ENCODE measurements at regions of chr15 and their contacts with region 1.

Region 1: DNA sequence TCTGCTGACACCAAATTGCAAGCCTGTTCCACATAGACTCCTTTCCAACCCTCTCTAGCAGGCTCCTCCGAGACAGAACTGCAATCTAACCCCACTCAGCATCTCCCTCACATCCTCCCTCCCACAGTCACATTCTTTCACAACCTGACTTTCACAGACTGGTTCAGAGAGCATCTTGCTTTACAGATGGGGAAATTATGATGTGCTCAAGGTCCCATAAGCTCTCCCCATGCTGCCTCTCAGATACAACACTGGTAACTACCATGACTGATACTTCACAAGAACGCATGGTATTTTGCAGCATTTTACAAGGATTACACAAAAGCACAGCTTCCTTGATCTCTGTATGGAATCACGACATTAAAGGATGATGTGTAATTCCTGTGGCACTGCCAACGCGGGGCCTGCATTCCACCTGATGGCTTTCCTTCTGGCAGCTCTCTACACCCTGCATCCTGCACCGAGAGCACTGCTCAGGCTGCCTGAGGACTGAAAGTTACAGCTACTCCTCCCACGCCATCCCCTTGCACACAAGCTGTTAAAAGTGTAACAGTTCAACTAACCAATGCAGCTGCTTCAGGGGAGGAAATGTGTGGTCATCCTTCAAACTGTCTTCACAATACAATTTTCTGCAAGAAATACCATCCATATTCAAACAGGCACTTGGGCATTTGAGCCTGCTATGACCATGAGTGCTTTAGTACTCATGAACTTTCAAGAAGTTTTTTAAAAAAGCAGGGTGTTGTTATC is 27.6 kb downstream of the TBC1D2B start:
- DNase-seq: no peak
- ATAC-seq: peak; percentile 31
- H3K4me3 ChIP-seq: no peak overlapping the region
- H3K4me3 Mint-ChIP-seq: peak overlapping the region; percentile 33
- H3K27ac ChIP-seq: no peak overlapping the region
- H3K27ac Mint-ChIP-seq: peak overlapping the region; percentile 78
- H3K4me1 ChIP-seq: peaks cover 29 to 33% of the 10 kb centered on the region in 2 donors
- H3K4me1 Mint-ChIP-seq: peaks cover 54% of the 10 kb centered on the region
- H3K27me3 ChIP-seq: no peaks in the 10 kb centered on the region
- H3K27me3 Mint-ChIP-seq: no peaks in the 10 kb centered on the region
- CTCF ChIP-seq: no peak

Region 2: GRCh38 chr15:77224352-77224751 is 825.5 kb before region 1 on chr15:
- CTCF ChIA-PET with region 1: no interaction called
- POLR2A ChIA-PET with region 1: no interaction called
- intact Hi-C with region 1: no loop called
- DNase-seq: no peak
- ATAC-seq: no peak
- H3K4me3 ChIP-seq: no peak overlapping the region
- H3K4me3 Mint-ChIP-seq: no peak overlapping the region
- H3K27ac ChIP-seq: no peak overlapping the region
- H3K27ac Mint-ChIP-seq: no peak overlapping the region
- H3K4me1 ChIP-seq: peaks cover 0 to 12% of the 10 kb centered on the region in 2 donors
- H3K4me1 Mint-ChIP-seq: peaks cover 14% of the 10 kb centered on the region
- H3K27me3 ChIP-seq: no peaks in the 10 kb centered on the region
- H3K27me3 Mint-ChIP-seq: no peaks in the 10 kb centered on the region
- CTCF ChIP-seq: no peak

Region 3: GRCh38 chr15:77393471-77393840 is 656.4 kb before region 1 on chr15:
- CTCF ChIA-PET with region 1: no interaction called
- POLR2A ChIA-PET with region 1: no interaction called
- intact Hi-C with region 1: no loop called
- DNase-seq: no peak
- ATAC-seq: no peak
- H3K4me3 ChIP-seq: no peak overlapping the region
- H3K4me3 Mint-ChIP-seq: no peak overlapping the region
- H3K27ac ChIP-seq: no peak overlapping the region
- H3K27ac Mint-ChIP-seq: no peak overlapping the region
- H3K4me1 ChIP-seq: peaks cover 0 to 4% of the 10 kb centered on the region in 2 donors
- H3K4me1 Mint-ChIP-seq: peaks cover 21% of the 10 kb centered on the region
- H3K27me3 ChIP-seq: no peaks in the 10 kb centered on the region
- H3K27me3 Mint-ChIP-seq: no peaks in the 10 kb centered on the region
- CTCF ChIP-seq: no peak

Region 4: DNA sequence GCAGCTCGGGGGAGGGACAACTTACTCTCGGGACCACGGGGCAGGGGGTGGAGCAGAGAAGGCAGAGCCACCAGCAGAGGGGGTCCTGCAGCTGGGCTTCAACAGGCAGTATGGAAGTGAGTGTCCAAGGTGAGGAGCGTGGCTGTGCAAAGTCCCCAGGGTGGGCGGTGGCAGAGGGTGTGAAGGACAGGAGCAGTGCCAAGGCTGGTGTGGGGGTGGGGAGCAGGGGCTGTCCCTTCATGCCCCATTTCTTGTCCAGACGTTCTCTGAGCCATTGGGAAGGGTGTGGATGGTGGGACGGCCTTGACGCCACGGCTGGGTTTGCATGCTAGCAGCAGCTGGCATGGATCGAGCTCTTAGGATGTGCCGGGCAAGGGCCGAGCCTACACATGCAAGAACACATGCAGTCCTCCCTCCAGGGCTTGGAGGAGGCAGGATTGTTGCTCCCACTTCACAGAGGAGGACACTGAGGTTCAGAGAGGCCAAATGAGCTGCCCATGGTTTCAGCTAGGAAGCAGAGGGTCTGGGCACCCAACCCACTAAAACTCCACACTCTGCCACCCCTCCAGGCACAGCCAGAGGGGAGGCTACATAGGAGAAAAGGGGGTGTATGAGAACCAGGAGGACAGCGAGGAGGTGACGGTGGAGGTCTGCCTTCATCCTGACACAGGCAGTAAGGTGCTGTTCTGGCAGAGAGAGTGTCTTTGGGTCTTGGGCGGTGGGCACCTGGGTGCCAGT is 66.0 kb before region 1 on chr15:
- CTCF ChIA-PET with region 1: no interaction called
- POLR2A ChIA-PET with region 1: no interaction called
- intact Hi-C with region 1: no loop called
- DNase-seq: no peak
- ATAC-seq: no peak
- H3K4me3 ChIP-seq: no peak overlapping the region
- H3K4me3 Mint-ChIP-seq: no peak overlapping the region
- H3K27ac ChIP-seq: no peak overlapping the region
- H3K27ac Mint-ChIP-seq: no peak overlapping the region
- H3K4me1 ChIP-seq: no peaks in the 10 kb centered on the region
- H3K4me1 Mint-ChIP-seq: peaks cover 1% of the 10 kb centered on the region
- H3K27me3 ChIP-seq: no peaks in the 10 kb centered on the region
- H3K27me3 Mint-ChIP-seq: peaks cover 8% of the 10 kb centered on the region
- CTCF ChIP-seq: no peak

Region 5: GRCh38 chr15:78034495-78035191 is 15.2 kb before region 1 on chr15:
- CTCF ChIA-PET with region 1: interaction called, 5 read pairs
- POLR2A ChIA-PET with region 1: no interaction called
- intact Hi-C with region 1: loop called (anchors 2 kb)
- DNase-seq: peak; percentile 51
- ATAC-seq: peak; percentile 74
- H3K4me3 ChIP-seq: no peak overlapping the region
- H3K4me3 Mint-ChIP-seq: peak overlapping the region; percentile 67
- H3K27ac ChIP-seq: peak overlapping the region; percentile 9 to 13
- H3K27ac Mint-ChIP-seq: peak overlapping the region; percentile 72
- H3K4me1 ChIP-seq: peaks cover 32 to 42% of the 10 kb centered on the region in 2 donors
- H3K4me1 Mint-ChIP-seq: peaks cover 57% of the 10 kb centered on the region
- H3K27me3 ChIP-seq: no peaks in the 10 kb centered on the region
- H3K27me3 Mint-ChIP-seq: no peaks in the 10 kb centered on the region
- CTCF ChIP-seq: no peak

Region 6: DNA sequence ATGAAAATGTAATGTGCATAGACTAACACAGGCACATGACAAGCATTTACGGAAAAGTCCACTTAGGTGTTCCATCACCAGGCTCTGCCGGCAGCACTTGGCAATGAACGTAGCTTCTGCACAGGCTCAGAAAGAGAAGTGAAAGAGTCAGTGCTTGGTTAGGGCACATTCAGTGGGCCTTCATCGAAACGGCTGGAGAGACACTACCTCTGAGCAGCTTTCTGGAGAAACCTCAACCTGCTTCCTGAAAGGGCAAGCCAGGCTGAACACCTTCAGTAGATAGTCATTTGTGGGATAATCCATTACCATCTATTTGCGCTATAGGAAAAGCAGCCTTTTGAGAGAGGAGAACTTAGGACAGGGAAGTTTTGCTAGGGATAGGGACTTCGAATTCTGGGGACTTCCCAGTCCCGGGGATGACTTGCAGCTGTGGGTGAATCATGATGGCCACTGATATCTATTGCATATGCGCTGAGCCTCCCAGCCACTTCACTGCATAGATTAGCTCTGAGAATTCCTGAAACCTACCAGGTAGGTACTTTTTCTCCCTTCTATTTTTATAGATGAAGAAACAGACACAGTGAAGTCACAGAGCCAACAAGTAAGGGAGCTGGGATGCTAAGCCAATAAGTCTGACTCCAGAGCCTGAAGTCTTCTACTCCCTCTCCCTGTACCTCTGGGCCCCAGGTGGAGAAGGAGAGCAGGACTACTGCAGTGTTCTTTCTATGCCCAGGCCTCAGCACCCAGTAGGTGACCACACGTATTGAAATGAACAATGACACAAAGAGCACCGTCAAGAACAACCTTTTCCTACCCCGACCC is 38.3 kb after region 1 on chr15:
- CTCF ChIA-PET with region 1: no interaction called
- POLR2A ChIA-PET with region 1: no interaction called
- intact Hi-C with region 1: loop called (anchors 5 kb)
- DNase-seq: peak; percentile 58
- ATAC-seq: peak; percentile 95
- H3K4me3 ChIP-seq: no peak overlapping the region
- H3K4me3 Mint-ChIP-seq: peak overlapping the region; percentile 18
- H3K27ac ChIP-seq: no peak overlapping the region
- H3K27ac Mint-ChIP-seq: peak overlapping the region; percentile 46
- H3K4me1 ChIP-seq: peaks cover 9% of the 10 kb centered on the region in 2 donors
- H3K4me1 Mint-ChIP-seq: peaks cover 14% of the 10 kb centered on the region
- H3K27me3 ChIP-seq: no peaks in the 10 kb centered on the region
- H3K27me3 Mint-ChIP-seq: peaks cover 8% of the 10 kb centered on the region
- CTCF ChIP-seq: no peak

Measured in B cell (primary cell).